Activated CD4-positive, alpha-beta T cell treated with anti-CD3 and anti-CD28 coated beads, Interleukin-2, amount 10 ng/mL, durations not matched to agents 24 days and 14 days (primary cell): ENCODE measurements at regions of chr6 and their contacts with region 1.

Region 1: GRCh38 chr6:111837641-111838500 is 35.4 kb downstream of the FYN start:
- DNase-seq: peak; percentile 86
- H3K4me3 Mint-ChIP-seq: peak overlapping the region; percentile 75
- H3K27ac Mint-ChIP-seq: peak overlapping the region; percentile 96
- H3K4me1 Mint-ChIP-seq: peaks cover 64% of the 10 kb centered on the region
- H3K27me3 Mint-ChIP-seq: no peaks in the 10 kb centered on the region

Region 2: GRCh38 chr6:111812060-111813038 is 25.5 kb before region 1 on chr6:
- intact Hi-C with region 1: loop called (anchors 1 kb)
- DNase-seq: peak; percentile 70
- H3K4me3 Mint-ChIP-seq: peak overlapping the region; percentile 78
- H3K27ac Mint-ChIP-seq: peak overlapping the region; percentile 93
- H3K4me1 Mint-ChIP-seq: peaks cover 67% of the 10 kb centered on the region
- H3K27me3 Mint-ChIP-seq: no peaks in the 10 kb centered on the region

Region 3: GRCh38 chr6:111823831-111824607 is 13.9 kb before region 1 on chr6:
- intact Hi-C with region 1: loop called (anchors 1 kb)
- DNase-seq: peak; percentile 71
- H3K4me3 Mint-ChIP-seq: peak overlapping the region; percentile 67
- H3K27ac Mint-ChIP-seq: peak overlapping the region; percentile 91
- H3K4me1 Mint-ChIP-seq: peaks cover 70% of the 10 kb centered on the region
- H3K27me3 Mint-ChIP-seq: no peaks in the 10 kb centered on the region

Region 4: GRCh38 chr6:111850295-111850937 is 12.5 kb after region 1 on chr6:
- intact Hi-C with region 1: loop called (anchors 1 kb)
- DNase-seq: no peak
- H3K4me3 Mint-ChIP-seq: peak overlapping the region; percentile 51
- H3K27ac Mint-ChIP-seq: peak overlapping the region; percentile 73
- H3K4me1 Mint-ChIP-seq: peaks cover 79% of the 10 kb centered on the region
- H3K27me3 Mint-ChIP-seq: no peaks in the 10 kb centered on the region

Region 5: GRCh38 chr6:111973118-111973761 is 135.4 kb after region 1 on chr6:
- intact Hi-C with region 1: loop called (anchors 1 kb)
- DNase-seq: peak; percentile 86
- H3K4me3 Mint-ChIP-seq: peak overlapping the region; percentile 73
- H3K27ac Mint-ChIP-seq: peak overlapping the region; percentile 86
- H3K4me1 Mint-ChIP-seq: peaks cover 51% of the 10 kb centered on the region
- H3K27me3 Mint-ChIP-seq: peaks cover 7% of the 10 kb centered on the region

Region 6: GRCh38 chr6:112049026-112049799 is 211.3 kb after region 1 on chr6:
- intact Hi-C with region 1: no loop called
- DNase-seq: no peak
- H3K4me3 Mint-ChIP-seq: no peak overlapping the region
- H3K27ac Mint-ChIP-seq: no peak overlapping the region
- H3K4me1 Mint-ChIP-seq: peaks cover 11% of the 10 kb centered on the region
- H3K27me3 Mint-ChIP-seq: no peaks in the 10 kb centered on the region